Psoas muscle (tissue), 8 donors: ENCODE measurements at regions of chr16 and their contacts with region 1.

Region 1: DNA sequence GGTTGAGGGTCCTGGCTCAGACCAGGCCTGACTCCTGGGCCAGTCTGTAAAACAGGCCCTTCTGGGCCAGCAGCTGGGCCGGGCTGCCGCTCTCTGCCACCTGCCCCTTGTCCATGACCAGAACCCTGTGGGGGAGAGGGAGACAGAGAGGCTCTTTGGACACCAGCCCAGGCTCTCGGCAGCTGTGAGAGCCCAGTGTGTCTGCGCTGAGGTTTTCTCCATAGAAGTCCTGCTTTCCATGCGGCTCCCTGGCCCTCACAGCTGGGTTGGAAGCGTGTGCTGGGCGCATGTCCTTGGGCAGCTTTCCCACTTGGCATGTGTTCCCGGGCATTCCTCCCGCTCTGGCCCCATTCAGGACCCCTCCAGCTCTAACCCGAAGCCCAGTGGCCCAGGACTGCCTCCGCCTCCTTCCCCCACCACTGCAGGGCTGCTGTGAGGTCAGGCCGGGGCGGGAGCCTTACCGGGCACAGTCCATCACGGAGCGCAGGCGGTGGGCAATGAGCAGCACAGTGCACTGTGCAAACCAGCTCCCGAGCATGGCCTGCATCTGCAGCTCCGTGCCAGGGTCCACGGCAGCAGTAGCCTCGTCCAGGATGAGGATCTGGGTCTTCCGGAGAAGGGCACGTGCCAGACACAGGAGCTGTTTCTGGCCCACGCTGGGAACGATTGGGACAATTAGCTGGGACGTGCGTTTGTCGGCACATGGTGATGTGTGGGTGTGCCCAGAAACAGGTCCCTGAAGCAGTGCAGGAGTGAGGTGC is 73.0 kb downstream of the ABCC6 start:
- DNase-seq: peak; percentile 54 to 70
- ATAC-seq: peak; percentile 66 to 79 (median 70)
- H3K4me3 ChIP-seq: no peak overlapping the region
- H3K27ac ChIP-seq: peak overlapping the region; percentile 27
- H3K4me1 ChIP-seq: peaks cover 14% of the 10 kb centered on the region
- H3K27me3 ChIP-seq: no peaks in the 10 kb centered on the region
- CTCF ChIP-seq: no peak

Region 2: GRCh38 chr16:15928261-15929104 is 221.8 kb before region 1 on chr16:
- intact Hi-C with region 1: no loop called
- DNase-seq: no peak
- ATAC-seq: peak in 1 of 4 donors; percentile 21
- H3K4me3 ChIP-seq: no peak overlapping the region
- H3K27ac ChIP-seq: no peak overlapping the region
- H3K4me1 ChIP-seq: no peaks in the 10 kb centered on the region
- H3K27me3 ChIP-seq: no peaks in the 10 kb centered on the region
- CTCF ChIP-seq: no peak

Region 3: DNA sequence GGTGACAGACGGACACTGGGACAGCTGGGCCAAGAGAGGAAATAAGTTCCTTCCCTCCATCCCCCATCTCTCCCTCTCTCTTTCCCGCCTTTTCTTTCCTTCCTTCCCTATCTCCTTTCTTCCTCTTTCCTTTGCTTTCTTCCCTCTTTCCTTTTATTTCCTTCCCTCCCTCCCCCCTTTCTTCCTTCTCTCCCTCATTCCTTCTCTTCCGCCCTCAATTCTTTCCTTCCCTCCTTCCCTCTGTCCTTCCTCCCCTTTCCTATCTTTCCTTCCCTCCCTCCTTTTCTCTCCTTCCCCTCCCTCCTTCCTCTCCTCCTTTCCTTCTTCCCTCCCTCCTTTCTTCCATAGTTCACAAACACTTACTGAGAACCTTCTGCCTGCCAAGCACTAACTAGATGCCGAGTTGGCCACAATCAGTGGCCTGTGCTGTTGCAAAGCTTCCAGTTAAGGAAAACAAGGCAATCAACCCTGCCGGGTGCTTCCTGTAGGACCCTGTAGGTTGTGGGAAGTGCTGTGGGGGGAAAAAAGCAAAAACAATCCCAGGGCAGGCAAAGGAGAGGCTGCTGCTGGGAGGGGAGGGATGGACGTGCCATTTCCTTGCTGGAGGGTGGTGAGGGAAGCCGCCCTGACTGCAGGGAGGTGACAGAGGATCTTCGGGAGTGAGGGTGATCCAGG is 41.3 kb after region 1 on chr16:
- intact Hi-C with region 1: loop called in 1 of 2 experiments (anchors 5 kb)
- DNase-seq: no peak
- ATAC-seq: no peak
- H3K4me3 ChIP-seq: no peak overlapping the region
- H3K27ac ChIP-seq: no peak overlapping the region
- H3K4me1 ChIP-seq: peaks cover 7% of the 10 kb centered on the region
- H3K27me3 ChIP-seq: no peaks in the 10 kb centered on the region
- CTCF ChIP-seq: no peak